ENCODE measurements at regions of chr18 and their contacts with region 1.

Region 1: DNA sequence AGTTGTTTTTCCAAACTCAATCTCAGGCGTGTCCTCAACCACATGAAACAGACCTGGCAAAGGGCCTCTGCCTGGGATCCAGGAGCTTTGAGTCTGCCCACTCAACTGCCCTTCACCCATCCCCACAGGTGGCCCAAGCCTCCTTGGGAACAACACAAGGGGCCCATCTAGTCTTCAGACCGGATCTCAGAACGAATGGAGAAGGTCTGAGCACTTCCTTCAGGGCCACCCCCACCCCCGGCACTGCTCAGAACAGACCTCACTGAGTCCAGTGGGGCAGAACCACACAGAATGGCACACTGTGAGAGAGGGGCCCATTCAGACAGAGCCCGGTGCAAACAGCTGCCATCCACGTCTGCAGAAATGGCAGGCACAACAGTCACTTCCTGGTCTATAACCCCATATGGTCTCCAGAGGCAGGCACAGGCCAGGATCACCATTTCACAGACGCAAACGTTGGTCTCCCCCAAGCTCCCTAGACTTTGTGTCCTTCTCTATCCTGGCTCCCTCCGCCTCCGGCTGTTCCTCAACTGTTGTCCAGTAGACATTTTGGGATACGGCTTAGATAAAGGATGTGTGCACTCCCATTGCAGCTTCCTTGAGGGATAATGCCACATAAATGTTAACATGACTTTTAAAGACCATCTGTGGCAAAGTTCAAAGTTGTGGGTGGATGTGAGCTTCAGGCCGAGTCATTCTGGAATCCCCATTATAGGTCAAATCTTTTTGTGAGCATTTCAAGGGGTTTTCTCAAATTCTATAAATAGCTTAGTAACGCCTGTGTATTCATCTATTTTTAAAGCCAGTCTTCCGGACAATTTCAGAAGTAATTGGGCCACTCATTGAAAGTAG is 149.7 kb downstream of the SMAD7 start:
- DNase-seq: peak; percentile 68
- ATAC-seq: peak; percentile 78
- H3K4me3 Mint-ChIP-seq: peak overlapping the region; percentile 34
- H3K27ac Mint-ChIP-seq: peak overlapping the region; percentile 87
- H3K4me1 Mint-ChIP-seq: peaks cover 70% of the 10 kb centered on the region
- H3K27me3 Mint-ChIP-seq: no peaks in the 10 kb centered on the region
- CTCF ChIP-seq: no peak

Region 2: DNA sequence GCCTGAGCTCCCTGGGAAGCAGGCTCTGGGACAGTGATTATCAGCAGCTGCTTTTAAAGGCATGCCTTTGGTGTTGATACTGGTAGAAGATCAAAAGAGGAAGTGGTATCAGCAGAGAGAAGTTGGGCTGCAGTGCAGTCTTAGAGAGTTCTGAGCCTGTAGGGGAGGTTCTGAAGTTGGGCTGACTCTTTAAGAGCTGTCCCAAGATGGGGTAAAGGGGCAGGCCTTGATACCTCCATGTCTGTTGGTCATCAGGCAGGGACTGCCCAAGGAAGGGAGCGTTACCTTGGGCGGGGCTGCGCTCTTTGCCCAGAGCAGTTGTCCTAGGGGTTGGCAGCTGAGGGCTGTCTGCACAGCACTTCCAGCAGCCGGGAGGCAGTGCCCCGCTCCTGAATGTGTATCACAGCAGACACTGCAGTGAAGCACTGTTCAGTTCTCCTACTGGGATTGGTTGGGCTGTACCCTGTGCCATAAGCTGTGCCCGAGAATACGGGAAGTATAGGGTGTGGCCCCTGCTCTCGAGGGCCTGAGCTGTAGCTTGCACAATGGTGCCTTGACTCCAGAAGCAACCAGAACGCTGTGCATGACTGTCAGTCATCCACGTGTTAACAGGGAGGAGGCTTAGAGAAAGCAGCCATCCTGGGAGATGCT is 85.3 kb before region 1 on chr18:
- CTCF ChIA-PET with region 1: no interaction called
- POLR2A ChIA-PET with region 1: no interaction called
- intact Hi-C with region 1: no loop called
- DNase-seq: no peak
- ATAC-seq: no peak
- H3K4me3 Mint-ChIP-seq: no peak overlapping the region
- H3K27ac Mint-ChIP-seq: no peak overlapping the region
- H3K4me1 Mint-ChIP-seq: no peaks in the 10 kb centered on the region
- H3K27me3 Mint-ChIP-seq: no peaks in the 10 kb centered on the region
- CTCF ChIP-seq: no peak

Region 3: GRCh38 chr18:48790226-48790874 is 10.8 kb before region 1 on chr18:
- CTCF ChIA-PET with region 1: interaction called, 12 read pairs
- POLR2A ChIA-PET with region 1: interaction called, 4 read pairs
- intact Hi-C with region 1: no loop called
- DNase-seq: no peak
- ATAC-seq: no peak
- H3K4me3 Mint-ChIP-seq: no peak overlapping the region
- H3K27ac Mint-ChIP-seq: no peak overlapping the region
- H3K4me1 Mint-ChIP-seq: peaks cover 9% of the 10 kb centered on the region
- H3K27me3 Mint-ChIP-seq: no peaks in the 10 kb centered on the region
- CTCF ChIP-seq: no peak

Region 4: DNA sequence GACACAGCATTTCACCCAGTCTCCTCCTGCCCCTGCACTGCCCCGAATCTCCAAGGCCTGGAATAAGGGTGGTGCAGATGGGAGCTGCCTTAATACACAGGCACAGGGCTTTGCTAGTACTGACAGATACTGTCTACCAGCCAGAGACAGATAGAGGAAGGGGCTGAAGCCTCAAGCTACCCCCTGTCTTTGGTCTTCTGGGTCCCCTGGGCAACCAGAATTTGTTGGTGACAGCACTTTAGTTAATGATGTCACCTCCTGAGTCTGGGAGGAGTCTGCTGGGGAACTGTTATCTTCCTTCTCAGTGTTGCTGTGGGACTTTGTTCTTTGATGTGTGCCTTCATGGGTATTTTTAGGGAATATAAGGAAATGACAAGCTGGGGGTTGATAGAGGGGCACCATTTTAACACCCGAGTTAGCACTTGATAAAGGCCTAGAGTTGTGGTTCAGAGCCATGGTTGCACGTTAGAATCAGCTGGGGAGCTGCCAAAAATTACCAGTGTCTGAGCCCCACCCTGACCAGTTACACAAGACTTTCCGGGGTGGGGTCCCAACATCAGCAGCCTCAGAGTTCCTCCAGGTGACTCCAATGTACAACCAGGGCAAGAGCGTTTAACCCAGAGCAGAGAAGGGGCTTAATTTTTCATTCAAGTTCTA is 12.9 kb after region 1 on chr18:
- CTCF ChIA-PET with region 1: no interaction called
- POLR2A ChIA-PET with region 1: interaction called, 12 read pairs
- intact Hi-C with region 1: no loop called
- DNase-seq: no peak
- ATAC-seq: peak; percentile 55
- H3K4me3 Mint-ChIP-seq: no peak overlapping the region
- H3K27ac Mint-ChIP-seq: peak overlapping the region; percentile 91
- H3K4me1 Mint-ChIP-seq: peaks cover 44% of the 10 kb centered on the region
- H3K27me3 Mint-ChIP-seq: no peaks in the 10 kb centered on the region
- CTCF ChIP-seq: no peak

Measured in activated CD8-positive, alpha-beta T cell treated with anti-CD3 and anti-CD28 coated beads for 36 hours (primary cell).